IMR-90 (cell line): ENCODE measurements at regions of chr16 and their contacts with region 1.

Region 1: DNA sequence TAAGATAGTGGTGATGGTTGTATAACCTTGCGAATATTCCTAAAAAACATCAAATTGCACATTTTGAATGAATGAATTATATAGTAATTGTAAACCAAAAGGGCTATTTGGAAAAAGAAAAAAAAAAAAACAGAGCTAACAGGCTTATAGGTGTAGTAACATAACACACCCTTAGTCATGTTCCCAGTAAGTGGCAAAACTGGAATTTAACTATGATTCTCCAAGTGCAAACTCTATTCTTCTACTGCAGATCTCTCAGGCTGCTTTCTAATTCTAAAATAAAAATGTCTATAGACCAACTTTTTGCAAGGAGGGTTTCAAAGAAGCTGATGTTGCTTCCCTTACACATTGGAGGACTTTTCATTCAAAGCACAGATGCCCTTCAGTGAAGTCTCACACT is 293.2 kb upstream of the MON1B start:
- DNase-seq: no peak
- ATAC-seq: no peak
- H3K4me3 ChIP-seq: no peak overlapping the region
- H3K27ac ChIP-seq: no peak overlapping the region
- H3K4me1 ChIP-seq: no peaks in the 10 kb centered on the region
- H3K27me3 ChIP-seq: no peaks in the 10 kb centered on the region
- CTCF ChIP-seq: no peak
- POLR2A ChIP-seq: no peak
- RAD21 ChIP-seq: no peak

Region 2: GRCh38 chr16:77133706-77134105 is 235.9 kb after region 1 on chr16:
- CTCF ChIA-PET with region 1: no interaction called
- POLR2A ChIA-PET with region 1: no interaction called
- dilution Hi-C with region 1: no loop called
- in situ Hi-C with region 1: no loop called
- intact Hi-C with region 1: loop called (anchors 5 kb)
- DNase-seq: no peak
- ATAC-seq: no peak
- H3K4me3 ChIP-seq: no peak overlapping the region
- H3K27ac ChIP-seq: no peak overlapping the region
- H3K4me1 ChIP-seq: no peaks in the 10 kb centered on the region
- H3K27me3 ChIP-seq: no peaks in the 10 kb centered on the region
- CTCF ChIP-seq: no peak
- POLR2A ChIP-seq: no peak
- RAD21 ChIP-seq: no peak